OCI-LY7 (cell line): ENCODE measurements at regions of chr4 and their contacts with region 1.

Region 1: DNA sequence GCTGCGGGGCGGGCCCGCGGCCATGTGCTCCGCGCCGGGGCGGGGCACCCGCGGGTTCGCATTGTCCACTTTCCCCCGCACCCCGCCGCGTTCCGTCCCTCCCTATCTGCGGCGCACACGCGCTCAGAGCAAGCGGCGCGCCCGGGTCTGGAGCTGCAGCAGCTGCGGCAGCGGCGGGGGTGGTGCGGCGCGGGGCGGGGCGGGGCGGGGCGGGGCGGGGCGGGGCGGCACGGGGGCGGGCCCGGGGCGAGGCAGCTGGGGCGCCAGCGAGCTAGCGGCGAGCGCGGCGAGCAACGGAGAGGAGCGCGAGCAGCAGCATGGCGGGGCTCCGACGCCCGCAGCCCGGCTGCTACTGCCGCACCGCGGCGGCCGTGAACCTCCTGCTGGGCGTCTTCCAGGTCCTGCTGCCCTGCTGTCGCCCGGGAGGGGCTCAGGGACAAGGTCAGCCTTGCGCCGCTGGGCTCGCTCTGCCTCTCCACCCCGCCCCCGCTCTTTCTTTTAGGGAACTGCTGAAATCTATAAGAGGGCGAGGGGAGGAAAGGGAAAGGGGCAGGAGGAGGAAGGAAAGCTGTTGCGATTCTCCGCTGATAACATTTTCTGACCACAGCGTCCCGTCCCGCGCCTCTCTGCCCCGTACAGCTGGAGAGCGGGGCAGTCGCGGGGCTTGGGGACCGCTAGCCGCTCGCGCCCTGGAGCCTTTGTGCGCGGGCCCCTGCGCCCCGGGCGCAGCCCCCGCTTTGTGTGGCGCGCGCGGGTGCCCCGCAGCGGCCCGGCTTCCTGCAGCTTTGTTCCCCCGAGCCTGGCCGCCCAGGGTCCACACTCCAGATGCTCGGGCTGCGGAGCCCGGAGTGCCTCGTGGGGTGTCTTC is at the start of gene TMEM131L:
- DNase-seq: peak; percentile 88
- H3K4me3 ChIP-seq: peak within 1 kb of the TSS; percentile 87
- H3K27ac ChIP-seq: peak within 1 kb of the TSS; percentile 95
- H3K4me1 ChIP-seq: peaks cover 47% of the 10 kb centered on the region
- CTCF ChIP-seq: peak; percentile 37; the same call in 1 of the 2 replicates
- total RNA-seq, gene TMEM131L: 98.7 and 148 TPM in 2 replicates

Region 2: GRCh38 chr4:153326513-153326912 is 139.8 kb before region 1 on chr4:
- CTCF ChIA-PET with region 1: no interaction called
- POLR2A ChIA-PET with region 1: no interaction called
- intact Hi-C with region 1: no loop called
- DNase-seq: no peak
- H3K4me3 ChIP-seq: no peak overlapping the region
- H3K27ac ChIP-seq: no peak overlapping the region
- H3K4me1 ChIP-seq: peaks cover 23% of the 10 kb centered on the region
- CTCF ChIP-seq: no peak

Region 3: GRCh38 chr4:153344131-153345010 is 121.9 kb before region 1 on chr4 and contains the start of gene MND1:
- CTCF ChIA-PET with region 1: interaction called, 3 read pairs
- POLR2A ChIA-PET with region 1: interaction called, 28 read pairs
- intact Hi-C with region 1: loop called (anchors 1 kb)
- DNase-seq: peak; percentile 95
- H3K4me3 ChIP-seq: peak within 1 kb of the TSS; percentile 87
- H3K27ac ChIP-seq: peak within 1 kb of the TSS; percentile 100
- H3K4me1 ChIP-seq: peaks cover 80% of the 10 kb centered on the region
- CTCF ChIP-seq: peak; percentile 90
- total RNA-seq, gene MND1: 59.4 and 67.9 TPM in 2 replicates

Region 4: GRCh38 chr4:153432968-153433753 is 33.2 kb before region 1 on chr4:
- CTCF ChIA-PET with region 1: interaction called, 4 read pairs
- POLR2A ChIA-PET with region 1: interaction called, 60 read pairs
- intact Hi-C with region 1: loop called (anchors 1 kb)
- DNase-seq: peak; percentile 94
- H3K4me3 ChIP-seq: peak overlapping the region; percentile 60
- H3K27ac ChIP-seq: peak overlapping the region; percentile 94
- H3K4me1 ChIP-seq: peaks cover 99% of the 10 kb centered on the region
- CTCF ChIP-seq: peak; percentile 96

Region 5: DNA sequence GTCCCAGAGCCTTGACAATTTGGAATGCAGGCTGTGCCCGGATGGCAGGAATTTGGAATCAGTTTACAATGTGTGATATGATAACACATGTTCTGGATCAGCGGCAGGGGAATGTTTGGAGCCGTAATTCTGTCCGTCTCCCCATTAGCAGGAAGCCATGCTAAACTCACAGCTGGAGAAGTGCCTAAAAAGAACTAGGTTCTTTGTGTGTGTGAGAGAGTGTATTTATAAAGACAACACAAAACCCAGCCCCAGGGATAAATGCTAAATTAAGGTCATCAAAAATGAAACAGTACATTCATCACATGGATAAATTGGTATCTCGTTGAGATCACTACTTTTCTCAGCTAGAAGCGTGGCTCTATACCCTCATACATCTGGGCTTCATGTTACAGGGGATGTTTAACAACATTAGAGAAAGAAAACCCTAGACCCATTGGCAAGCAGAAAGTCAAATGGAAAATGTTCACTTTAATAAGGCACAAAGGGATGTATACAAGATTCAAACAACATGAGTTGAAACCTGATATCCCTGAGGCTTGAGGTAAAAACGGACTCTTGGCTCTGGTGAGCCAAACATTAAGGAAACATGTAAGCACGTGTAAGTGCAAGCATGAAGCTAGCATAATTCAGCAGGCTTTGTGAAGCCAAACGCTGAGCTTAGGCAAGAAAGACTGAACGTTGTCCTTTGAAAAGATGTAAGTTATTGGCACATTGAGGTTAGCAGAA is 18.1 kb before region 1 on chr4:
- CTCF ChIA-PET with region 1: interaction called, 3 read pairs
- POLR2A ChIA-PET with region 1: interaction called, 52 read pairs
- intact Hi-C with region 1: no loop called
- DNase-seq: no peak
- H3K4me3 ChIP-seq: no peak overlapping the region
- H3K27ac ChIP-seq: no peak overlapping the region
- H3K4me1 ChIP-seq: peaks cover 33% of the 10 kb centered on the region
- CTCF ChIP-seq: no peak

Region 6: DNA sequence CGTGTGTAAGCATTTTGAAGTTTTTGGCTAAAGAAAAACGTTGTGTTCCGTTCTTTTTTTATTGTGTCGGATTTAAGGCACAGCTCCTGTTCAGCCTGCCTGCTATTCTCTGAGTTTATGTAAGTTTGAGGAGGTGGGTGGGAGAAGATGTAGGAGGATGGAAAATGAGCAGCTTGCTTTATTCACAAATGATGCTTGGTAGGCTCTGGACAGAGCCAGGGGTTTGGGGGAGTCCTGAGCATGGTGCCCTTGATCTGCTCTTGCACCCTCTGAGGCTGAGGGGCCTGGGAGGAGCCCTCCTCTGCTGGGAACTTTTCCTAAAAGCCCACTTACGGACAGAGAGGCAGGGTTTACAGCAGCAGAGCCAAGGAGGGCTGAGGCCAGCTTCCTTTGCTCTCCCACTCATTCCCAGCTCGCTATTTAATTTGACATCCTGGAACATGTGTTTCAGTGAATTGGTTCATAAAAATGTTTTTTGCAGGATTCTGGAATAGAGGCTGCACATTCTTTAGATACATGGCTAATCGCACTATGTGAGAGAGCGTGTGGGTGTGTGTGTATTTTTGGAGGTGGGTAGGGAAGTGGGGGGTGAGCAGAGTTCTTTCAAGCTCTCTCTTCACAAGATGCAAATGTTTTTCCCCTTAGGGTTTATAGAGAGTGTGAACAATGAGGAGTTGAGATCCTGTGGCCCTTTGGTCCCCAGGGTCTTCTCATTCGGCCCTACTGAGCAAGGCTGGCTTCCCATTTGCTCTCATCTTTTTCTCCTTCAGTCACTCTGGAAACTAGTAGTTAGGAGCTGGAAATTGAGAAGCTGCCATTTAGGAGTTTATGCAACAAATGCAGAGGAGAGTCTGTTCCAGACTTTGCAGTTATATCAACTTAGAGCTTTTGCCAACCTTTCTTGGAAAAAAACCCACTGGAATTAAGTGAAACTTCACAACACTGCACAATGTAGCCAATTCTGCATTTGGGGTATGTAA is 32.0 kb after region 1 on chr4:
- CTCF ChIA-PET with region 1: no interaction called
- POLR2A ChIA-PET with region 1: interaction called, 11 read pairs
- intact Hi-C with region 1: no loop called
- DNase-seq: peak; percentile 61
- H3K4me3 ChIP-seq: peak overlapping the region; percentile 27
- H3K27ac ChIP-seq: peak overlapping the region; percentile 45
- H3K4me1 ChIP-seq: peaks cover 62% of the 10 kb centered on the region
- CTCF ChIP-seq: no peak

Region 7: DNA sequence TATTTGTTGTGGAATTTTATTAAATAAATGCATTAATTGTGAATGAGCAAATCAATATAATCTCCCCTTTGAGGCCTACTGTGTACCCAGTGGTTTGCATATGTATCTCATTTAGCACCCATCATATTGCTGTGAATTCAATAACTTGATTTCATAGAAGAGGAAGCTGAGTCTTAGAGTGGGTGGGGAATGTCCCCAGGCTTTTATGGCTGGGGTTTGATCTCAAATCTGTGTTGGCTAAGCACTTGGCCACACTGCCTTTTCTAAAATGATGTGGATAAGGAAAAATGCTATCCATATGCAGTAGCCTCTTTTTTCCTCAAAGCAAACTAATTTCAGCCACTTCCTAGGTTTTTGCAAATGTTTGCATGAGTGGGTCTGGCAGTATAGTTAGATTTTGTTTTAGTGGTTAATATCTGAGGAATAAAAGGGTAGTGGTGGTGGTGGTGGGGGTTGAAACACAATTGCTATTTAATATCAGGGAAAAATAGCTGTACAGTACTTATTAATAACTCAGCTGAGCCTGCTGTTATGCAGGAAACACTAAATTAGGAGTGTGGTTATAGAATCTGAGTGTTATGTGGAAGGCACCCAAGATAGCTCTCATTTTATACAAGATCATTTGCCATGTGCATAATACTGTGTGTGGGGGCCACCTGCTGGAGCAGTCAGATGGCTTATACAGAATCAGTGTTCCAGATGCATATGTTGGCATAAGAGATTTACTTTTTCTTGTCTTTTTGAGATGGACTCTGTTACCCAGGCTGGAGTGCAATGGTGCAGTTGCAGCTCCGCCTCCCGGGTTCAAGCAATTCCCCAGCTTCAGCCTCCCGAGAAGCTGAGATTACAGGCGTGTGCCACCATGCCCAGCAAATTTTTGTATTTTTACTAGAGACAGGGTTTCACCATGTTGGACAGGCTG is 107.8 kb after region 1 on chr4:
- CTCF ChIA-PET with region 1: interaction called, 6 read pairs
- POLR2A ChIA-PET with region 1: interaction called, 10 read pairs
- intact Hi-C with region 1: loop called (anchors 1 kb)
- DNase-seq: peak; percentile 83
- H3K4me3 ChIP-seq: peak overlapping the region; percentile 42
- H3K27ac ChIP-seq: peak overlapping the region; percentile 85
- H3K4me1 ChIP-seq: peaks cover 92% of the 10 kb centered on the region
- CTCF ChIP-seq: peak; percentile 85